A673 (cell line): ENCODE measurements at regions of chr2 and their contacts with region 1.

Region 1: DNA sequence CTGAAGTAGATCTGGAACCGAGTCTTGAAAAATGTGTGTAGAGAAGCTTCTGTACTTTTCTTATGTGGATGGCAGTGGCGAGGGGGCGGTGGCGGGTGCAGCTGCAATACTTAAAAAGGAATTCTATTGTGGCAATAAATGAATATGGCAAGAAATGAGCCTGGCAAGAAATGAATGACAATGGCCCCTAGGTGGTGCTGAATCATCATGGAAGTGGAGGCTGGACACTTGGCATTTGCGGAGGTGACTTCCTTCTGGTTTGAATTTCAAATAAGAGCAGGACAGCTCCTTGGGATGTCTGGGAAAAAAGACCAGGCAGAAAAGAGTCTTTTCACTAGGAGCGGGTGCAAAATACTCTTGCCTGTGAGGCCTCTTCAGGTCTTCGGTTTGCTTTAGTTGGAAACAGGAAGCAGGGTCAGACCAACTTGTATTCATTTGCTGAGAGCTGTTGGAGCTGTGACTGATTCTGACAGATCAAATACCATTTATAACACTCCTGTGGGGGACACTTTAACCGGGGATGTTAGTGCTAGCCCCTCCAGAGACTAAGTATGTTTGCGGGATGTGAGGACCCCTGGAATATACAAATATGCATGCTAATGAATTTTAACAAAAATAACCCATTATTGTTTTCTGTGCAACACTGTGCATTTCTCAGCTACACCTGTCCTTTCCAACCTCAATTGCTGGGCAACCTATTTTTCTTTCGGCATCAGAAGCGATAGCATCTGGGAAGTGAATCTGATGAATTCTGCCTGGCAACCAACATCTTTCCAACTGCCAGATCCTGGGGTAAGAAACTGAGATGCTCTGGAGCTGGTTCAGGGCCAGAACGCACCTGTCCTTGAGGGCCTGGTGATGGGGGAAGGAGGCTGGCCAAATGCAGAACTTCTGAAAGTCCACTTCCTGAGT is 35.4 kb downstream of the FASTKD2 start:
- DNase-seq: peak; percentile 80
- H3K4me3 ChIP-seq: no peak overlapping the region
- H3K27ac ChIP-seq: no peak overlapping the region
- H3K4me1 ChIP-seq: no peaks in the 10 kb centered on the region
- H3K27me3 ChIP-seq: no peaks in the 10 kb centered on the region
- CTCF ChIP-seq: peak; percentile 74

Region 2: DNA sequence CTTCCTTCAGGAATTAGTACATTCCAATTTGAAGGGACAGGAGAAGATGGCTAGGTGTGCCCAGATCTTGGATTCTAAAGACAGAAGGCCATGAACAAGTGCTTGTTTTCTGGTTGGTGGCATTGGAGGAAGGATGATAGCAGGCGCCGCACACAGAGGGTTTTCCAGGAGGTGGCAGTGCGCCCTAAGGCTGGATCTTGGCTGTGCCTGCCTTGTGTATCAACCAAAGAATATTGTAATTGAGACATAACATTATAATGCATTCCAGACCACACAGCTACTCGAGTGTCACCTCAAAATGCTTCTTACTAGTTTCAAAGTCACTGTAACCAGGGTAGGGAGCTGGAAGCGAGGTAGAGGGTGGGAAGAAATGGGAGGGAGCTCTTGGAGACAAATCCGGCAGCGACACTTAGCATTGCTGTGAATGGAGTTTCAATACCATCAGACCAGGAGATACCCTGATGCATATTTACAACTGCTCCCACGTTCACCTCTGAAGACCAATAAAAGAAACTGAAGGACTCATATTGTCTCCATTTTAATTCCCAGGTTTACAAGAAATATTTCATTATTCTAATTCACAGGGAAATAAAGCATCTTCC is 181.1 kb after region 1 on chr2:
- CTCF ChIA-PET with region 1: no interaction called
- POLR2A ChIA-PET with region 1: no interaction called
- intact Hi-C with region 1: loop called (anchors 5 kb)
- DNase-seq: peak; percentile 65
- H3K4me3 ChIP-seq: no peak overlapping the region
- H3K27ac ChIP-seq: no peak overlapping the region
- H3K4me1 ChIP-seq: no peaks in the 10 kb centered on the region
- H3K27me3 ChIP-seq: peaks cover 38% of the 10 kb centered on the region
- CTCF ChIP-seq: peak; percentile 71

Region 3: GRCh38 chr2:207467716-207468347 is 667.1 kb after region 1 on chr2:
- CTCF ChIA-PET with region 1: interaction called, 15 read pairs
- POLR2A ChIA-PET with region 1: no interaction called
- intact Hi-C with region 1: loop called (anchors 1 kb)
- DNase-seq: no peak
- H3K4me3 ChIP-seq: no peak overlapping the region
- H3K27ac ChIP-seq: no peak overlapping the region
- H3K4me1 ChIP-seq: peaks cover 5% of the 10 kb centered on the region
- H3K27me3 ChIP-seq: peaks cover 27% of the 10 kb centered on the region
- CTCF ChIP-seq: no peak